ENCODE measurements at regions of chr6 and their contacts with region 1.

Region 1: GRCh38 chr6:18792866-18793265 is 405.7 kb downstream of the RNF144B start:
- DNase-seq: no peak
- ATAC-seq: no peak
- H3K4me3 ChIP-seq: no peak overlapping the region
- H3K27ac ChIP-seq: no peak overlapping the region
- H3K4me1 ChIP-seq: no peaks in the 10 kb centered on the region
- H3K27me3 ChIP-seq: no peaks in the 10 kb centered on the region
- CTCF ChIP-seq: no peak
- EP300 ChIP-seq: no peak
- POLR2A ChIP-seq: no peak
- RAD21 ChIP-seq: no peak

Region 2: DNA sequence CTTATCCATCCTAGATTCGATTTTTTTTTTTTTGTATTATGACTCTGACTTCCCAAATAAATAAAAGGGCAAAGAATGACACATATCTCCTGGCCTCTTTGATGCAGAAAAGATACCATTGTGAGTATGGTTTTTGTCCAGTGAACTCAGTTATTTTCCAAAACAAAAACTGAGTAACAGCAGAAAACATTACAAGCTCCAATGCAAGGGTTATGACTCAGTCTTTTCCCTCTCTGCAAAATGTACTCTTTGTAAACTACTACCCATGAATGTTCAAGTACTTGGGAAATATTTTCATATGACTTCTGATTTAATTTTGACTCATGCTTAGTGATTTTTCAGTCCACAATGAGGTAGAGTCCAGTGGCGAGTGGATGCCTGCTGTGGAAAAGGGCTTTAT is 50.5 kb before region 1 on chr6:
- CTCF ChIA-PET with region 1: no interaction called
- POLR2A ChIA-PET with region 1: no interaction called
- in situ Hi-C with region 1: no loop called
- intact Hi-C with region 1: loop called (anchors 2 kb)
- DNase-seq: no peak
- ATAC-seq: no peak
- H3K4me3 ChIP-seq: no peak overlapping the region
- H3K27ac ChIP-seq: no peak overlapping the region
- H3K4me1 ChIP-seq: no peaks in the 10 kb centered on the region
- H3K27me3 ChIP-seq: no peaks in the 10 kb centered on the region
- CTCF ChIP-seq: no peak
- EP300 ChIP-seq: no peak
- POLR2A ChIP-seq: no peak
- RAD21 ChIP-seq: no peak